ENCODE measurements at regions of chr14 and their contacts with region 1.

Region 1: DNA sequence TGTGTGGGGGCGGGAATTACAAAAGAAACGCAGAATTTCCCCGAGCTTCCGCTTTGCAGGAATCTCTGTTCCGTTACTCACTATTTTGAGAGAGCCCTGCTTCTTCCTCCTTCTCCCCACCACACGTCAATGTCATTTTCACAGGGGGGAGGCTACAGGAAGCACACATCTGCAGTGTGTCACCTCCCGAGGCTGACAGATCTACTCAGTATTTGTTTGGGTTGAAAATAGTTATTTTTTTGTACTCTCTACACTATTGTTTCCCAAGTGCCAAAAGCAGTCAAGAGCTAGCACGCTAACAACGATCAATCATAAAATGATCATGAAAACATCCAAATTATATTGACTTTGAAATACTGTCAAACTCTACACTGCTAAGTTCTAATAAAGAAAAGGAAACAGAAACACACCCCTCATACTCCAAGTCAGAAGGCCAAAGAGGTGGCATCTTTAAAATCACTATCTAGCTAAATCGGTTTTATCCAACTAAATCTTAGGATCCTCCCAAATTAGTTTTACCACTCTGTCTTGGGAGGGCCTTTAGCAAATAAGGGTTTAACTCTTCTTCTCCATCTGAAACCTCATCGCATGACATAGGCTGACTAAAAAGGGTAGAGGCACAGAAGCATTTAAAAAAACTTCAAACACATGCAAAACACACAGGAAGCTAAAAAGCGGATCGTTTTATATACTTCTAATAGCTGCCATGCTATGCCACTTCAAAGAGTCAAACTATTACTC is 51.8 kb downstream of the FOXN3 start:
- DNase-seq: peak; percentile 81
- ATAC-seq: peak; percentile 96
- H3K4me3 ChIP-seq: peak overlapping the region; percentile 59
- H3K27ac ChIP-seq: peak overlapping the region; percentile 97
- H3K4me1 ChIP-seq: peaks cover 31% of the 10 kb centered on the region
- H3K27me3 ChIP-seq: no peaks in the 10 kb centered on the region
- CTCF ChIP-seq: no peak
- EP300 ChIP-seq: peak; percentile 82 to 90
- POLR2A ChIP-seq: peak; percentile 51; the same call in 1 of the 2 replicates
- RAD21 ChIP-seq: no peak; the same call in 1 of the 2 replicates

Region 2: GRCh38 chr14:89330236-89331002 is 34.8 kb before region 1 on chr14:
- CTCF ChIA-PET with region 1: interaction called, 4 read pairs
- POLR2A ChIA-PET with region 1: interaction called, 3 read pairs
- RAD21 ChIA-PET with region 1: interaction called, 7 read pairs
- SMC1A ChIA-PET with region 1: interaction called, 22 read pairs
- in situ Hi-C with region 1: no loop called
- intact Hi-C with region 1: loop called (anchors 1 kb)
- DNase-seq: no peak
- ATAC-seq: peak; percentile 1; the same call in 1 of the 3 replicates
- H3K4me3 ChIP-seq: no peak overlapping the region; the same call in 1 of the 2 replicates
- H3K27ac ChIP-seq: peak overlapping the region; percentile 91
- H3K4me1 ChIP-seq: peaks cover 50% of the 10 kb centered on the region
- H3K27me3 ChIP-seq: no peaks in the 10 kb centered on the region
- CTCF ChIP-seq: no peak
- EP300 ChIP-seq: no peak
- POLR2A ChIP-seq: no peak
- RAD21 ChIP-seq: no peak

Region 3: GRCh38 chr14:89336338-89336737 is 28.9 kb before region 1 on chr14:
- CTCF ChIA-PET with region 1: interaction called, 4 read pairs
- POLR2A ChIA-PET with region 1: interaction called, 4 read pairs
- RAD21 ChIA-PET with region 1: interaction called, 7 read pairs
- SMC1A ChIA-PET with region 1: interaction called, 22 read pairs
- in situ Hi-C with region 1: no loop called
- intact Hi-C with region 1: loop called (anchors 1 kb)
- DNase-seq: no peak
- ATAC-seq: peak; percentile 62
- H3K4me3 ChIP-seq: no peak overlapping the region
- H3K27ac ChIP-seq: no peak overlapping the region
- H3K4me1 ChIP-seq: peaks cover 59% of the 10 kb centered on the region
- H3K27me3 ChIP-seq: no peaks in the 10 kb centered on the region
- CTCF ChIP-seq: peak; percentile 8 to 35 (median 21); a peak in 4 of 6 replicates
- EP300 ChIP-seq: no peak
- POLR2A ChIP-seq: no peak
- RAD21 ChIP-seq: peak; percentile 69

Region 4: GRCh38 chr14:89344920-89345254 is 20.3 kb before region 1 on chr14:
- CTCF ChIA-PET with region 1: interaction called, 3 read pairs
- POLR2A ChIA-PET with region 1: no interaction called
- RAD21 ChIA-PET with region 1: interaction called, 3 read pairs
- SMC1A ChIA-PET with region 1: interaction called, 51 read pairs
- in situ Hi-C with region 1: no loop called
- intact Hi-C with region 1: no loop called
- DNase-seq: no peak
- ATAC-seq: no peak
- H3K4me3 ChIP-seq: no peak overlapping the region
- H3K27ac ChIP-seq: no peak overlapping the region
- H3K4me1 ChIP-seq: peaks cover 18% of the 10 kb centered on the region
- H3K27me3 ChIP-seq: no peaks in the 10 kb centered on the region
- CTCF ChIP-seq: no peak
- EP300 ChIP-seq: no peak
- POLR2A ChIP-seq: no peak
- RAD21 ChIP-seq: no peak

Region 5: DNA sequence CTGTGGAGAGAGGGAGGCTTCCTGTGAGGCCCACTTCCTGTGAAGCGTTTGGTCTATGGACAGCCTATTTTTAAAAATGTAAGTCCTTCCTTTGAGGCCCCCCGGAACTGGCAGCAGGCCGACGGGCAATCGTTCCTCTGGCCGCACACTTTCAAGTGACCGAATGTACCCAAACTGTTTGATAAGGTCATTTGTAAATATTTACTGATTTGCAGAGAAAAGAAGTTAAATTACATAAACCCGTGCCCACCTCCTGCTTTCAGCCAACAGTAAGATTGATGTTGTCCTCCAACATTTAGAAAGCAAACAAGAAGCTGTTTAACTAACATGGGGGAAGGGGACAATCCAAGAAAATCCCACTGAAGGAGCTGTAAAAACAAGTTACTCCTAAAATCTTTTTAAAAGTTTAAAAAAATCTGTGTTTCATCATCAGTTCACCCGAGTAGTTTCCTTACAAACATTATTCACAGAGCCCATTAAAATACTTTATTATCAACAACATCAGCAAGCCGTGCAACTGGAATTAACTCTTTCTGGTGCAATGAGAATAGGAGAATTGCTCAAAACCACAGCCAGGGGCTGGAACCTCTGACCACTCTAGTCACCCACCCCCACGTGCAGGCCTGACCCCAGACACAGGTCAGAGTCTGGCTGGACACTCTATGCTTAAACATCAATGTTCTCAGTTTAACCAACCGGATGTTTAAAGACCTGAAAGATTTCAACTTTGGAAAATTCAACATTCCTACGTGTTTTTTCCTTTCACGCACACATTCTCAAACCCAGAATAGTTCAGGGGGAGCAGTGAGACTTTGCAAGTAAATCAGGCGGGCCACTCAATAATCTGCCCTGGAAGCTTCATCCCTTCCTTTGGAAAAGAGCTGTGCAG is 13.5 kb before region 1 on chr14:
- CTCF ChIA-PET with region 1: interaction called, 13 read pairs
- POLR2A ChIA-PET with region 1: interaction called, 10 read pairs
- RAD21 ChIA-PET with region 1: interaction called, 16 read pairs
- SMC1A ChIA-PET with region 1: interaction called, 51 read pairs
- in situ Hi-C with region 1: no loop called
- intact Hi-C with region 1: loop called (anchors 1 kb)
- DNase-seq: peak; percentile 54
- ATAC-seq: peak; percentile 95
- H3K4me3 ChIP-seq: peak overlapping the region; percentile 38
- H3K27ac ChIP-seq: peak overlapping the region; percentile 91
- H3K4me1 ChIP-seq: peaks cover 24% of the 10 kb centered on the region
- H3K27me3 ChIP-seq: no peaks in the 10 kb centered on the region
- CTCF ChIP-seq: no peak
- EP300 ChIP-seq: peak in 1 of 2 experiments; percentile 47; a peak in 1 of 4 replicates
- POLR2A ChIP-seq: 0 out of 2 replicates have a peak, but pooled peaks have one; percentile 46
- RAD21 ChIP-seq: no peak

Region 6: DNA sequence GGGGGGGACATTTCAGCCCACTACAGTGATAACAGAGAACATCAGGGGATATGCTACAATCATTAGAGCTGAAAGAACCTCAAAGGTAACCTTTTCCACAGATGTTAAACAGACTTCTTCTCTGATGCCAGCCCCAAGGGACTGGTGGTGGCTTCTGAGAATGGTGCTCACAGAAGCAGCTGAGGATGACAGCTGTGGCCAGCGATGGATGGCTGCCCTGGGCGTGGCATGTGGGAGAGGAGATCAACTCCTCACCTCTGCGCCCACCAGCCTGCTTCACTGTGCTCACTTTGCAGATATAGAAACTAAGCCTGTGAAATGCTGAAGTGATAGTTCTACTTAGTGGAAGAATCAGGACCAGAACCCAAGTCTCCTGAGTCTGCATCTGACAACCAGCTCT is 18.8 kb after region 1 on chr14:
- CTCF ChIA-PET with region 1: interaction called, 29 read pairs
- POLR2A ChIA-PET with region 1: interaction called, 13 read pairs
- RAD21 ChIA-PET with region 1: interaction called, 37 read pairs
- SMC1A ChIA-PET with region 1: interaction called, 40 read pairs
- in situ Hi-C with region 1: no loop called
- intact Hi-C with region 1: loop called (anchors 1 kb)
- DNase-seq: peak; percentile 92
- ATAC-seq: peak; percentile 92
- H3K4me3 ChIP-seq: peak overlapping the region; percentile 28
- H3K27ac ChIP-seq: peak overlapping the region; percentile 77
- H3K4me1 ChIP-seq: peaks cover 49% of the 10 kb centered on the region
- H3K27me3 ChIP-seq: no peaks in the 10 kb centered on the region
- CTCF ChIP-seq: no peak
- EP300 ChIP-seq: peak; percentile 46 to 54; a peak in 2 of 4 replicates
- POLR2A ChIP-seq: no peak
- RAD21 ChIP-seq: no peak

Region 7: DNA sequence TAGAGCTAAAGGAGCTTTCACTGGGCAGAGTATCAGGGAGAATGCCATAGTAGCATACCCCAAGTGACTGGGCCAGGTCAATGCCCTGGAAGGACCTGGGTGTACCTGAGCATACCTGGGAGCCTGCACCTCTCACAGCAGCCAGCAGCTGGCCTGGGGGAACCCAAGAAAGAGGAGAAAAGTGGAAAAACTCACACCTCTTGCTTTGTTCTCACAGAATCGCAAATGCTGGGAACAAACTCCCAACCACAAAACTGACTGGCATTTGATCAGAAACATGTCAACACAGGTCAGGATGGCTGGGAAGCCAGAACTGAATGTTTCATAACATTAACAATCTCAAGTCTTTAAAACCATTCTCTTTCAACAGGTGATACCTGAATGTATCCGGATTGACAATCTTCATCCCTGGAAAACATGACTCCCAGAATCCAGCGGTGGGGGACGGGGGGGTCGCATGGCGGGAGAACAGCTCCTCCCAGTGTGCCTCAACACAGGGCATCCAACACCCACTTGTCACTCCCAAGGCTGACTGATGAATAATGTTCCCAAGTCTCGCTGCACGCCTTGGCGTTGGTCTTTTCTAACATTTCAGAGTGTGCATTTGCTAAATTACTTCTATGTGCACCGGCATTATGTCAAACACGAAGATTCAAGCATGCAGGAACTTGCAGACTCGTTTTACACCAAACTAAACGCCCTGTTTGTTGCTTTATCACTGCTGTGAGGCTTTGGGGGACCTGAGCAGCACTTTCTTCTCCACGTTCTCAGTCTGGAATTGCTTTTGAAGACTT is 43.9 kb after region 1 on chr14:
- CTCF ChIA-PET with region 1: interaction called, 5 read pairs
- POLR2A ChIA-PET with region 1: interaction called, 6 read pairs
- RAD21 ChIA-PET with region 1: interaction called, 3 read pairs
- SMC1A ChIA-PET with region 1: interaction called, 19 read pairs
- in situ Hi-C with region 1: no loop called
- intact Hi-C with region 1: no loop called
- DNase-seq: no peak
- ATAC-seq: peak; percentile 38; the same call in 2 of the 3 replicates
- H3K4me3 ChIP-seq: peak overlapping the region; percentile 57
- H3K27ac ChIP-seq: peak overlapping the region; percentile 49
- H3K4me1 ChIP-seq: peaks cover 28% of the 10 kb centered on the region
- H3K27me3 ChIP-seq: no peaks in the 10 kb centered on the region
- CTCF ChIP-seq: no peak
- EP300 ChIP-seq: no peak
- POLR2A ChIP-seq: no peak
- RAD21 ChIP-seq: no peak

Measured in GM12878 (cell line).